HEK293 (cell line): ENCODE measurements at regions of chr14 and their contacts with region 1.

Region 1: GRCh38 chr14:89936658-89937185 is 17.8 kb downstream of the EFCAB11 start:
- H3K4me3 ChIP-seq: no peak overlapping the region
- H3K27ac ChIP-seq: no peak overlapping the region
- H3K4me1 ChIP-seq: peaks cover 4% of the 10 kb centered on the region
- CTCF ChIP-seq: no peak

Region 2: GRCh38 chr14:89892953-89893352 is 43.8 kb before region 1 on chr14:
- CTCF ChIA-PET with region 1: no interaction called
- POLR2A ChIA-PET with region 1: no interaction called
- H3K4me3 ChIP-seq: no peak overlapping the region
- H3K27ac ChIP-seq: no peak overlapping the region
- H3K4me1 ChIP-seq: no peaks in the 10 kb centered on the region
- CTCF ChIP-seq: no peak

Region 3: DNA sequence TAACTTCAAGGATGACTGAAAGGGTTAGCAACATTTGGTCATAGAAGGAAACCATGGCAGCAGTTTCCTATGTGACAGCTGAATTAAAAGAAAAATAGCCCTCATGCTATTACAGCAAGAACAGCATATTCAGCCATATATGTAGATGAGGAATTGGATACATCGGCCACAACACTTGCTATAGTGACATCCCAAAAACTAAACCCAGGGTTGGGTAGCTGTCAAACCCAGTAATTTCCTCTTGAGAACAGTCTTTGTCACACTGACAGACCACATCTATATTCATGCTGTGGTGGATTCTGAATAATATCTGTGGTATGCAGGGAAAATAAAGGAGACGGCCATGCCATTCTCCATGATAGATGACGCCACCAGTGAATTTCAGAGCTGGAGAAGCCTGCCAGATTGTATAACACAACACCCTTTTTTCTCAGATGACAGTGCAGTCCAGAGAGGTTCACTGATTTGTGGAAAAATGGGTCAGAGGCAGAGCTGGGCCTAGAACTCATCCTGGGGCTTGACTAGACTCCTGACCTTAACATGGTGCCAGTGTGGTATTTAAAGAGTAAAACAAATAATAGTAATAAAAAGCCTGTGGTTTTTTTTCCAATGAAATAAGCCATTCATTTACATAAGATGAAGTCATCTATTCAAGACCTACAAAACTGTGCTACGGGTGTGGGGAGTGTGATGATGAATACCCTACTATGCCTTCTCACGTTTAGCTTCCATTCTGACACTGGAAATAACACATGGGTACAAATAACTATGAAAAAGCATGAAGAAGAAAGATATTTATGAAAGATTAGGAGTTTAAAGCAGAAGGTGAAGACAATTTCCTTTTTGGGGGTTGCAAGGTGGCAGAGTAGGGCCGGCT is 14.5 kb before region 1 on chr14:
- CTCF ChIA-PET with region 1: interaction called, 18 read pairs
- POLR2A ChIA-PET with region 1: no interaction called
- H3K4me3 ChIP-seq: no peak overlapping the region
- H3K27ac ChIP-seq: no peak overlapping the region
- H3K4me1 ChIP-seq: no peaks in the 10 kb centered on the region
- CTCF ChIP-seq: no peak

Region 4: DNA sequence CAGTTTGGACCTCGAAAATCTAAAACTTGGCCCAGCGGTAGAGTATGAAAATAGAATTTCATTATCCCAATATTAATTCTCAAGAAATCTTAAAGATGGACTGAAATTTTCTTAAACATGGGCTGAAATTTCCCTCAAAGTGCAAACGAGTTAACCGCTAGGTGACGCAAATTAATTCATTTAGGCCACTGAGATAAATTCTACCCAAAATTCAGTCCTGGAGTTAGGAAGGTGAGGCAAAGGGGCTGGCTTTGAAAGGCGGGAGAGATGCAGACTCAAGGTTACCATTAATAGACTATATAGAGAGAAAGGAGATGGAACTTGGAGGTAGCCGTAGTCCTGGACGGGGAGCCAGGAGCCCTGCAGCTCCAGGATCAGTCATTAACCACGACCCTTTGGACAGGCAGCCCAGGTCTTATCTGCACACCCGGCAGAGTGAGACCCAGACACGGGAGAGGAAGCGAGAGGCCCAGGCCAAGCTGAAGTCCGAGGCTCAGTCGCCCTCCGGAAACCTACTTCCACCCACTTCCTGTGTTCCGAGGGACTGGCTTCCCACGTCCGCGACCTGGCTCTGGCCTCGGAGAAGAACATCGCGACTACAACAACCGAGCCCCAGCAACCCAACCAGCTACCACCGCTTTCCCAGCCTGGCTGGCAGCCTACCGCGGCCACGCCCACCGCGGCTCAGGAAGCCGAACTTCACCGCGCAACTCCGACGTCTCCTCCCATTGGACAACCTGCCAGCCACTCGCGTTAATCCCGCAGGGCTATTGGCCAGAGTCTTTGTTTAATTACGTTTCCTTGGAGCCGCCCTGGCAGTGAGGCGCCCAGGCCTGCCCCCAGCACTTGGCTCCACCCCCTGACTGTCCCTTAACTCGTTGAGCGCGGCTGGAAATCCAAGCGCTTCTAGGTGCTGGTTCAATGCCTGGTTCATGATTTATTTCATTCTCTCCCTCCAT is 17.6 kb after region 1 on chr14 and contains the start of gene EFCAB11:
- CTCF ChIA-PET with region 1: interaction called, 39 read pairs
- POLR2A ChIA-PET with region 1: interaction called, 4 read pairs
- H3K4me3 ChIP-seq: peak within 1 kb of the TSS; percentile 72
- H3K27ac ChIP-seq: peak within 1 kb of the TSS; percentile 77
- H3K4me1 ChIP-seq: peaks cover 3% of the 10 kb centered on the region; the same call in 1 of the 2 replicates
- CTCF ChIP-seq: peak; percentile 39; the same call in 1 of the 2 replicates